ENCODE measurements at regions of chr4 and their contacts with region 1.

Region 1: DNA sequence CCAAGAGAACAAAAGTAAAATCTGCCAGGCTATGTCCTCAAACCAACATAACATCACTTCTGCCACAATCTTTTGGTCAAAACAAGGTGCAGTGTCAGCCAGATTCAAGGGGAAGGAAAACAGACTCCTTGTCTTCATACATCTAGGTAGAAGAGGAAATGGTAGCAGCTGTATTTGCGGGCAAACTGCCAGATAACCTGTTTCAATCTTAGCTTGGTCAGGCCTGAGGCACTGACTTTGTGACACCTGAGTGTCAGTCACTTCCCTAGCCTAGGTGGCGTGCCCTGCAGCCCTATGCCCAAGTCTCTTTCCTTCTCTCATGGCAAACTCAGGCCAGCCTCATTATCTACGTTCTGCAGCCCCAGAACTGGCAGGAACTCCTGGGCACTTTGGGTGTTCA is 146.2 kb upstream of the JADE1 start:
- DNase-seq: no peak
- H3K4me3 ChIP-seq: no peak overlapping the region
- H3K27ac ChIP-seq: no peak overlapping the region
- H3K4me1 ChIP-seq: peaks cover 3 to 29% of the 10 kb centered on the region in 2 donors
- H3K27me3 ChIP-seq: no peaks in the 10 kb centered on the region
- CTCF ChIP-seq: no peak

Region 2: GRCh38 chr4:128574706-128575105 is 88.6 kb before region 1 on chr4:
- intact Hi-C with region 1: loop called (anchors 5 kb)
- DNase-seq: peak in 1 of 2 donors; percentile 78
- H3K4me3 ChIP-seq: no peak overlapping the region
- H3K27ac ChIP-seq: no peak overlapping the region
- H3K4me1 ChIP-seq: peaks cover 6 to 17% of the 10 kb centered on the region in 2 donors
- H3K27me3 ChIP-seq: no peaks in the 10 kb centered on the region
- CTCF ChIP-seq: peak in 2 of 3 experiments; percentile 39 to 42